ENCODE measurements at regions of chr5 and their contacts with region 1.

Region 1: GRCh38 chr5:141412854-141413539 is at the start of gene PCDHGA10:
- DNase-seq: peak; percentile 71
- ATAC-seq: peak; percentile 75
- H3K4me3 Mint-ChIP-seq: peak within 1 kb of the TSS; percentile 71
- H3K27ac Mint-ChIP-seq: no peak within 1 kb of the TSS
- H3K4me1 Mint-ChIP-seq: peaks cover 26% of the 10 kb centered on the region
- H3K27me3 Mint-ChIP-seq: peaks cover 60% of the 10 kb centered on the region
- total RNA-seq, gene PCDHGA10: not detected

Region 2: GRCh38 chr5:141320225-141321169 is 92.5 kb before region 1 on chr5 and contains the start of gene TAF7:
- CTCF ChIA-PET with region 1: interaction called, 14 read pairs
- POLR2A ChIA-PET with region 1: no interaction called
- DNase-seq: peak; percentile 95
- ATAC-seq: peak; percentile 94
- H3K4me3 Mint-ChIP-seq: peak within 1 kb of the TSS; percentile 99
- H3K27ac Mint-ChIP-seq: peak within 1 kb of the TSS; percentile 100
- H3K4me1 Mint-ChIP-seq: peaks cover 33% of the 10 kb centered on the region
- H3K27me3 Mint-ChIP-seq: peaks cover 2% of the 10 kb centered on the region
- total RNA-seq, gene TAF7: 65.5 to 67.0 TPM

Region 3: GRCh38 chr5:141402553-141403260 is 10.3 kb before region 1 on chr5 and contains the start of gene PCDHGA9:
- CTCF ChIA-PET with region 1: interaction called, 17 read pairs
- POLR2A ChIA-PET with region 1: no interaction called
- DNase-seq: no peak
- ATAC-seq: no peak
- H3K4me3 Mint-ChIP-seq: peak within 1 kb of the TSS; percentile 26
- H3K27ac Mint-ChIP-seq: no peak within 1 kb of the TSS
- H3K4me1 Mint-ChIP-seq: peaks cover 3% of the 10 kb centered on the region
- H3K27me3 Mint-ChIP-seq: peaks cover 46% of the 10 kb centered on the region
- total RNA-seq, gene PCDHGA9: 0.08 TPM in 1 of 2 experiments, not detected in the other

Region 4: GRCh38 chr5:141524604-141525597 is 111.9 kb after region 1 on chr5:
- CTCF ChIA-PET with region 1: interaction called, 24 read pairs
- POLR2A ChIA-PET with region 1: no interaction called
- DNase-seq: peak; percentile 58
- ATAC-seq: peak; percentile 75
- H3K4me3 Mint-ChIP-seq: no peak overlapping the region
- H3K27ac Mint-ChIP-seq: peak overlapping the region; percentile 75
- H3K4me1 Mint-ChIP-seq: peaks cover 32% of the 10 kb centered on the region
- H3K27me3 Mint-ChIP-seq: no peaks in the 10 kb centered on the region

Region 5: DNA sequence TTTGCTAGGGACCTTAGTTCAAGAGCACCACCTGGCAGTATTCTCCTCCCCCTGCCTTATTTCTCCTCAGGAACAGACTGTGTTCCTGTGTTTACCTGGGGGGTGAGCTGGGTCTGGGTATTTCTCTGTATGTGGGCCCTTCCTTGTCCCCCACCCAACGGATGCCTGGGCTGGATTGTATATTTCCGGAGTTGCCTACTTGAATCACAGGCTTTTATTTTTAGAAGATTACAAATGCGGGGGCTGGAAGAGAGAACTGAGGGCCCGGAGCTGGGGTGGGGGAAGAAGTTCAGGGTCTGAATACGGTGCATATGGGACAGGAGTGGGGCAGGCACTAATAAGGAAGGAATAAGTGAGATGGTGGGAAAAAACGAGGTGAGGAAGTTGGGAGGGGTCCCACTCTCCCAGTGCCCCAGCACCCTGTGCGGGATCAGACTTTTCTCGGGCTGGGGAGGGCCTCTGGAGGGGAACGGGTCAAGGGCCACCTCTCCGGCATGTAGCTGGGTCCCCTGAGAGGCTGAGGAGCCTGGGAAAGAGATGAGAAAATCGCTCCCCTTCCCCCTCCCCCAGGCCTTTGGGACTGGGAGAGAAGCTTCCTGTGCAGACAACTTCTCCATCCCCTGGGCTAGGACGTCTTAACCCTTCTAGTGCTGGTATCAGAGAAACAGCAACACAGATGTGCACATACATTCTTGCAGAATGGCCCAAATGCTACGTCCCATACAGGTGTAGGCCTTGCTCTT is 423.1 kb after region 1 on chr5:
- CTCF ChIA-PET with region 1: no interaction called
- POLR2A ChIA-PET with region 1: no interaction called
- DNase-seq: no peak
- ATAC-seq: no peak
- H3K4me3 Mint-ChIP-seq: no peak overlapping the region
- H3K27ac Mint-ChIP-seq: no peak overlapping the region
- H3K4me1 Mint-ChIP-seq: peaks cover 8% of the 10 kb centered on the region
- H3K27me3 Mint-ChIP-seq: peaks cover 13% of the 10 kb centered on the region